ENCODE measurements at regions of chr2 and their contacts with region 1.

Region 1: GRCh38 chr2:101518578-101519492 is 43.9 kb upstream of the RFX8 start:
- DNase-seq: peak in 1 of 2 donors; percentile 33
- ATAC-seq: peak; percentile 76 to 94 (median 82)
- H3K4me3 ChIP-seq: peak overlapping the region; percentile 12
- H3K27ac ChIP-seq: no peak overlapping the region
- H3K4me1 ChIP-seq: no peaks in the 10 kb centered on the region
- H3K27me3 ChIP-seq: no peaks in the 10 kb centered on the region
- CTCF ChIP-seq: peak; percentile 40

Region 2: GRCh38 chr2:100968146-100969145 is 550.4 kb before region 1 on chr2:
- intact Hi-C with region 1: no loop called
- DNase-seq: no peak
- ATAC-seq: no peak
- H3K4me3 ChIP-seq: no peak overlapping the region
- H3K27ac ChIP-seq: no peak overlapping the region
- H3K4me1 ChIP-seq: no peaks in the 10 kb centered on the region
- H3K27me3 ChIP-seq: no peaks in the 10 kb centered on the region
- CTCF ChIP-seq: no peak

Region 3: DNA sequence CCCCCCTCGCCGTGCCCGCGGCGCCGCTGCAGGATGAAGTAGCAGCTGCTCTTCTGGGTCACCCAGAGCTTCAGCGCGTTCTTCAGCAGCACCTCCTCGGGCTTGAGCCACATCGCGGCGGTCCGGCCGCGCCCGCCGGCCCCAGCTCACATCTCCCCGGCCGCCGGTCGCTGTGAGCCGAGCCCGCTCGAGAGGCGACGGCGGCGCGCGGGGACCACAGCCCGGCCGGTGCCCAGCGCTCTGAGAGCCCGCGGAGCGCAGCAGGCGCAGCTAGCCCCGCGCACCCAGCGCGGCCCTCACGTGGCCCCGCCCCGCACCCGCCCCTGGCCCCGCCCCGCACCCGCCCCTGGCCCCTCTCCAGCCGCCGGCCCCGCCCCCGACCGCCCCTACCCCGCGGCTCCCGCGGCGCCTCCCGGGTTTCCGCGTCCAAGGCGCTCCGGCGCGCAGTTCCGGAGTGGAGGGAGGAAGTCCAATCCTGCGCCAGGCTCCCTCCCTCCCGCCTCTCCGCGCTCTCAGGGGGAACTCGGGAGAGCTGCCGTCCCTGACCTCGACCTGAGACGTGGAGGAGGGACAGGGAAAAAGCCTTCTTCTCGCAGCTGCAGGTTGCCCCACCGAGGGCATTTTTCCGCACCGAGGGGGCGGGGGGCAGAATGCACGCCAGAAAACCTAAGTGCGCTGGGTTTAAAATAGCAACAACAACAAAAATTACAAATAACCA is 367.5 kb before region 1 on chr2 and contains the start of gene TBC1D8:
- intact Hi-C with region 1: no loop called
- DNase-seq: peak; percentile 91 to 96
- ATAC-seq: peak; percentile 74 to 80 (median 75)
- H3K4me3 ChIP-seq: peak within 1 kb of the TSS; percentile 88
- H3K27ac ChIP-seq: peak within 1 kb of the TSS; percentile 89
- H3K4me1 ChIP-seq: peaks cover 57% of the 10 kb centered on the region
- H3K27me3 ChIP-seq: no peaks in the 10 kb centered on the region
- CTCF ChIP-seq: no peak
- total RNA-seq, gene TBC1D8: 8.7 to 163 (median 57.0) TPM

Region 4: GRCh38 chr2:101410716-101411211 is 108.1 kb before region 1 on chr2:
- intact Hi-C with region 1: no loop called
- DNase-seq: no peak
- ATAC-seq: no peak
- H3K4me3 ChIP-seq: no peak overlapping the region
- H3K27ac ChIP-seq: no peak overlapping the region
- H3K4me1 ChIP-seq: no peaks in the 10 kb centered on the region
- H3K27me3 ChIP-seq: peaks cover 0 to 3% (median 3%) of the 10 kb centered on the region in 3 donors
- CTCF ChIP-seq: no peak

Region 5: GRCh38 chr2:101428422-101429176 is 90.2 kb before region 1 on chr2:
- intact Hi-C with region 1: loop called in 1 of 2 experiments (anchors 5 kb)
- DNase-seq: no peak
- ATAC-seq: peak; percentile 35 to 85 (median 65)
- H3K4me3 ChIP-seq: peak overlapping the region; percentile 39
- H3K27ac ChIP-seq: peak overlapping the region; percentile 80
- H3K4me1 ChIP-seq: peaks cover 15% of the 10 kb centered on the region
- H3K27me3 ChIP-seq: no peaks in the 10 kb centered on the region
- CTCF ChIP-seq: no peak

Region 6: DNA sequence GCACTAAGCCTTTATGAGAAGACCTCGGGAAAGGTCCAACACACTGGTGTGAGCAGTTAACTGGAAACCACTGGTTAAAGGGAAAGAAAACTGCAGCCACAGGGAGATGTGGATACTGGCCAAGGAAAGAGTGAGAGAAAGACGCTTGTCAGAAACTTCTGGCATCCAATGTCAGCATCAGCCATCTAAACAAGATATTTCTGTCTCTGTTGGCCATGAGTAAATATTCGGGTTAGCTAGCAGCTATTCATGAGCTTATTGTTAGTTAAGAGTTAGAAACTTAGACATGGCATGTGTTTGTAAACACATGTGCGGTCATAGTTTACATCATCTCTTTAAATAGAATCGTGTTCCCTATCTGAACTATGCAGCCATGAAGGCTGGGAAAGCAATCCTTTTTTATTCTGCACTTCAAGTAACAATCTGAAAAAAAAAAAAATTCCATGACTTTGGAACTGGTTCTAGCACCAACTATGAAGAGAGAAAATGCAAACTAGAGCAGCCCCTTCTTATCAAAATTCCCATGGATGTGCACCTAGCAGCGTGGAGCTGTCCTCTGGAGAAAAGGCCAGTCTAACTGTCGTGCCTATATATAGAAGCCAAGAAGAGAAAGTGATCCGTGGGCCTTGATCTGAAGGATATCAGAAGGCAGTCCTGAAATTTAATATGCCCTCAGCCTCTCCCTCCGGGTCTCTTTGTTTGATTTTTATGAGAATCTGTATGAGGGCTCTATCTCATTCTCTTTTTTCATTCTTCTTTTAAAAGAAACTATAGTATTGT is 40.1 kb after region 1 on chr2:
- intact Hi-C with region 1: loop called in 1 of 2 experiments (anchors 5 kb)
- DNase-seq: no peak
- ATAC-seq: peak; percentile 88 to 95 (median 90)
- H3K4me3 ChIP-seq: peak overlapping the region; percentile 39
- H3K27ac ChIP-seq: peak overlapping the region; percentile 90
- H3K4me1 ChIP-seq: peaks cover 7% of the 10 kb centered on the region
- H3K27me3 ChIP-seq: no peaks in the 10 kb centered on the region
- CTCF ChIP-seq: no peak

Region 7: DNA sequence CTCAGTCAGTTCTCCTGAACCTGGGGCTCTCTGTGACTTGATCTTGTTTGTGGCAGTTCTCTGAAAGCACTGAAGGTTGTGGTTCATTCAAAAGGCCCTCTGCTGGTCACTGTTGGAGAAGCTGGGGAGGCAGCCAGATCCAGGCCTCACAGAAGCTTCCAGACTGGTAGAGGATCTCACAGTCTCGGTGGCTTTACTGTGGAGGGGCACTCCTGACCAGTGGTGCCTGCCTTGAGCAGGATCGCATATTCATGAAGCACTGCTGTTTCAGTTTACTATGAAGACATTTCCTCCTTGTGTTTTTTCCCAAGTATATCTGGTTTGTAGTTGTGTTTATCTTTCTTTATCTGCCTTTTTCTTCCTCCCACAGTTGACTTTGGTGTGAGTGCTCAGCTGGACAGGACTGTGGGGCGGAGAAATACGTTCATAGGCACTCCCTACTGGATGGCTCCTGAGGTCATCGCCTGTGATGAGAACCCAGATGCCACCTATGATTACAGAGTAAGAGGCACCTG is 312.6 kb after region 1 on chr2:
- intact Hi-C with region 1: loop called (anchors 2 kb)
- DNase-seq: peak; percentile 62 to 76
- ATAC-seq: peak; percentile 88 to 96 (median 91)
- H3K4me3 ChIP-seq: no peak overlapping the region
- H3K27ac ChIP-seq: no peak overlapping the region
- H3K4me1 ChIP-seq: peaks cover 17% of the 10 kb centered on the region
- H3K27me3 ChIP-seq: no peaks in the 10 kb centered on the region
- CTCF ChIP-seq: peak; percentile 84

Region 8: GRCh38 chr2:101837354-101837753 is 318.5 kb after region 1 on chr2:
- intact Hi-C with region 1: loop called in 1 of 2 experiments (anchors 2 kb)
- DNase-seq: no peak
- ATAC-seq: no peak
- H3K4me3 ChIP-seq: no peak overlapping the region
- H3K27ac ChIP-seq: no peak overlapping the region
- H3K4me1 ChIP-seq: no peaks in the 10 kb centered on the region
- H3K27me3 ChIP-seq: no peaks in the 10 kb centered on the region
- CTCF ChIP-seq: no peak

Measured in psoas muscle (tissue), 8 donors.